Posterior cingulate gyrus (tissue), 11 donors: ENCODE measurements at regions of chr11 and their contacts with region 1.

Region 1: GRCh38 chr11:40306938-40307548 is 1152.4 kb downstream of the LRRC4C start:
- DNase-seq: peak in 2 of 10 donors; percentile 34 to 46

Region 2: GRCh38 chr11:40401132-40401853 is 94.2 kb after region 1 on chr11:
- intact Hi-C with region 1: loop called (anchors 10 kb)
- DNase-seq: no peak